WTC11 (cell line): ENCODE measurements at regions of chr10 and their contacts with region 1.

Region 1: GRCh38 chr10:1048732-1049424 is at the start of gene IDI1:
- DNase-seq: peak; percentile 96
- ATAC-seq: peak; percentile 90
- H3K4me3 Mint-ChIP-seq: peak within 1 kb of the TSS; percentile 97
- H3K27ac Mint-ChIP-seq: peak within 1 kb of the TSS; percentile 100
- H3K4me1 Mint-ChIP-seq: peaks cover 32% of the 10 kb centered on the region
- H3K27me3 Mint-ChIP-seq: no peaks in the 10 kb centered on the region
- CTCF ChIP-seq: no peak
- total RNA-seq, gene IDI1: 41.7 to 47.2 TPM (median 44.7 TPM) in 3 replicates

Region 2: DNA sequence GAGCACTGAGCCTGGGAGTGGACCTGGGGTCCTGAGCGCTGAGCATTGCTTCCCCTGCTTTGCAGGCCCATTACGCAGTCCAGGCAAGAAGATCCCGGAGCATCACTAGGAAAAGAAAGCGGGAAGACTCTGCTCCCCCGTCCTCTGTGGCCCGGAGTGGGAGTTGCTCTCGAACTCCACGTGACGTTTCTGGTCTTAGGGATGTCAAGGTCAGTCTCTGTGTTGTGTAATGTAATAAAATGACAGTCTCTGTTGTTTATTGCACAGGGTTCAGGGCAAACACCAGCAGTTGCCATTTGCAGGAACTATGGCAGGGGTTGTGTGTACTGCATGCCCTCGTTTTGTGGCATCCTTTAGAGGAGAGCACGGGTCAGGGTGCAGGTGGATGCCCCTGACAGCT is 33.2 kb before region 1 on chr10:
- CTCF ChIA-PET with region 1: no interaction called
- POLR2A ChIA-PET with region 1: no interaction called
- DNase-seq: no peak
- ATAC-seq: no peak
- H3K4me3 Mint-ChIP-seq: no peak overlapping the region
- H3K27ac Mint-ChIP-seq: no peak overlapping the region
- H3K4me1 Mint-ChIP-seq: peaks cover 4% of the 10 kb centered on the region
- H3K27me3 Mint-ChIP-seq: no peaks in the 10 kb centered on the region
- CTCF ChIP-seq: no peak

Region 3: DNA sequence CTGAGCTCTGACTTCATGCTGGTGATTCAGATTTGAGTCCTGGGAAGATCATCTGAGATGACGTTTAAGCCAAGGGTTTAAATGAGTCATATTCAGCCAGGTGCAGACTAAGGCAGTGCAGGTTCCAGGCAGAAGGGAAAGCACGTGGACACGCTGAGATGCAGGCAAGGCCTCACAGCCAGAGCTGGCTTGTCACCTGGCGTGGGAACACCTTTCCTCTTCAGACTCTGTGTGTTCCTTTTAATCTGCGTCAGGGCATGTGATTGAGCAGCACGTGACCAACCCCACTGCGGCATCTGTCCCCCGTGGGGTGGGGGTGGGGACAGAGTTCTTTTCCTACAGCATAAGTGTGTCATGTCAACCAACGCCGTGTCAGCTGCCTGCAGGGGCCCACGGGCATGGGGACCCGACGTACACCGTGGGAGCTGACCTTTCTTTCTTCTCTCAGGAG is 12.5 kb before region 1 on chr10:
- CTCF ChIA-PET with region 1: interaction called, 7 read pairs
- POLR2A ChIA-PET with region 1: interaction called, 10 read pairs
- DNase-seq: no peak
- ATAC-seq: no peak
- H3K4me3 Mint-ChIP-seq: no peak overlapping the region
- H3K27ac Mint-ChIP-seq: no peak overlapping the region
- H3K4me1 Mint-ChIP-seq: no peaks in the 10 kb centered on the region
- H3K27me3 Mint-ChIP-seq: no peaks in the 10 kb centered on the region
- CTCF ChIP-seq: no peak